ENCODE measurements at regions of chr2 and their contacts with region 1.

Region 1: GRCh38 chr2:236551471-236552211 is 18.0 kb upstream of the ACKR3 start:
- DNase-seq: no peak
- H3K4me3 Mint-ChIP-seq: no peak overlapping the region
- H3K27ac Mint-ChIP-seq: peak overlapping the region; percentile 64
- H3K4me1 Mint-ChIP-seq: peaks cover 93% of the 10 kb centered on the region
- H3K27me3 Mint-ChIP-seq: no peaks in the 10 kb centered on the region

Region 2: GRCh38 chr2:235917506-235917905 is 634.1 kb before region 1 on chr2:
- CTCF ChIA-PET with region 1: no interaction called
- intact Hi-C with region 1: no loop called
- DNase-seq: no peak
- H3K4me3 Mint-ChIP-seq: no peak overlapping the region
- H3K27ac Mint-ChIP-seq: no peak overlapping the region
- H3K4me1 Mint-ChIP-seq: no peaks in the 10 kb centered on the region
- H3K27me3 Mint-ChIP-seq: peaks cover 6% of the 10 kb centered on the region

Region 3: GRCh38 chr2:236250909-236251579 is 300.6 kb before region 1 on chr2:
- CTCF ChIA-PET with region 1: no interaction called
- intact Hi-C with region 1: no loop called
- DNase-seq: no peak
- H3K4me3 Mint-ChIP-seq: no peak overlapping the region
- H3K27ac Mint-ChIP-seq: no peak overlapping the region
- H3K4me1 Mint-ChIP-seq: no peaks in the 10 kb centered on the region
- H3K27me3 Mint-ChIP-seq: peaks cover 17% of the 10 kb centered on the region

Region 4: DNA sequence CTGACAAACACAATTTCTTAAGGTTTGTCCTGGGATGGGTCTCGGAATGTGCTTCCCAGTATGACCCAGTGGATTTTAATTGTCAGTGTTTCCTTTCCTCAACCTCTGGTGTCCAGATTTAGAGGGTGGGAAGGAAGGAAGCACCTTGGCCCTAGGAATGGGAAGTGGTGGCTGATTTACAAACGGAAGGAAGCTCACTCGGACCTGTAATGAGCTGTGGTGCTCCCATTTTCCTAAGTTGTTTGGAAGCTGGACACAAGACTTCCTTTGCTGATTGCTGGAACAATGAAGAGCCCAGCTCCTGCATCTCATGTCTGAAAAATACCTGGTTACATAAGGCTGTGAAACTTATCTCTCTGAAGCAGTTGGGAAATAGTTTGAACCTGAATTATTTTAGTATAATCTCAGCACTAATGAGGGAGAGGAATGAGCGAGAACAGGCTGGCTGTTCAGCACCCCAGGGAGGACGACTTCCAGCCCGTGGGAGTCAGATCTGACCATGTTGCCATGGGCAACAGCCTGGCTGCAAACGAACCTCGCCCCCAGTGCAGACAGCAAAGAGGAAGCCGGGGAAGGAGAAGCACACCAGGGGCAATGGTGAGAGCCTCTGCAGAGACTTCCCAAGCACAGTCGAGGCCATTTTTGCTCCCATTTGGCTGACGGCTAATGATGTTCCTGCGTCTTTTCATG is 213.0 kb before region 1 on chr2:
- CTCF ChIA-PET with region 1: no interaction called
- intact Hi-C with region 1: no loop called
- DNase-seq: no peak
- H3K4me3 Mint-ChIP-seq: no peak overlapping the region
- H3K27ac Mint-ChIP-seq: no peak overlapping the region
- H3K4me1 Mint-ChIP-seq: no peaks in the 10 kb centered on the region
- H3K27me3 Mint-ChIP-seq: no peaks in the 10 kb centered on the region

Region 5: DNA sequence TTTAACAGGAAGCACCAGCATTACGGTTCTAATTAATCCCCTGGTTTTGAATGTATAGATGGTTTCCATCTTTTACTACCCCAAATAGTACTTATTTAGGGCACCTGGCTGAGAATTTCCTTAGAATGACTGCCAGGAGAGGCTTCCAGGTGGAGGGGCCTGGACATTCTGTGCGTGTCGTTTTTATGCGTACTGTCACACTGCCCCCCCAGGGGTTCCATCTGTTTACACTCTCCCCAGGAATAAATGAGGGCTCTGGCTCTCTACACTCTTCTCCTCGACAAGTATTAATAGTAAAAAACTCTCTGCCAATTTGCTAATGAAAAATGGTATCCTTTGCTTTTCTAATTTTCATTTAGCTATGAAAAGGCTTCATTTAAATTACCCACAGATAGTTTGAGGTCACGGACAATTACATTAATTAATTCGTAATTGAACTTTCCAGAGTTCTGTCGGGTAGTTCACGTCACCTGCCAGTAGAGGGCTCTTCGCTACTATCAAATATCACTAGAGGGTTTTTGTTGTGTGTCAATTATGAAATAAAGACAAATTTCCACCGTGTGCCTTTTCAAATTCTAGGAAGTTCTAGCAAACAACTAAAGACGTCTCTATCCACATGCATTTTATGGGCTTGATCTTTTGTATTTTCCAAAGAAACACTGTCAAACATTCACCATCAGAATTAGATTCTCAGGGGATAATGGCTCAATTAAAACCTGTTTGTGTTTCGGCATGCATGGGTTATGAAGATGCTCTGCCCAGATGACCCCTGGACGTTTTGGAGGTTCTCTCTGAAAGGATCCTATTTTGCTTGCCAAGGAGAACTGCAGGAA is 198.7 kb before region 1 on chr2:
- CTCF ChIA-PET with region 1: no interaction called
- intact Hi-C with region 1: no loop called
- DNase-seq: peak; percentile 45
- H3K4me3 Mint-ChIP-seq: no peak overlapping the region
- H3K27ac Mint-ChIP-seq: no peak overlapping the region
- H3K4me1 Mint-ChIP-seq: no peaks in the 10 kb centered on the region
- H3K27me3 Mint-ChIP-seq: no peaks in the 10 kb centered on the region

Region 6: DNA sequence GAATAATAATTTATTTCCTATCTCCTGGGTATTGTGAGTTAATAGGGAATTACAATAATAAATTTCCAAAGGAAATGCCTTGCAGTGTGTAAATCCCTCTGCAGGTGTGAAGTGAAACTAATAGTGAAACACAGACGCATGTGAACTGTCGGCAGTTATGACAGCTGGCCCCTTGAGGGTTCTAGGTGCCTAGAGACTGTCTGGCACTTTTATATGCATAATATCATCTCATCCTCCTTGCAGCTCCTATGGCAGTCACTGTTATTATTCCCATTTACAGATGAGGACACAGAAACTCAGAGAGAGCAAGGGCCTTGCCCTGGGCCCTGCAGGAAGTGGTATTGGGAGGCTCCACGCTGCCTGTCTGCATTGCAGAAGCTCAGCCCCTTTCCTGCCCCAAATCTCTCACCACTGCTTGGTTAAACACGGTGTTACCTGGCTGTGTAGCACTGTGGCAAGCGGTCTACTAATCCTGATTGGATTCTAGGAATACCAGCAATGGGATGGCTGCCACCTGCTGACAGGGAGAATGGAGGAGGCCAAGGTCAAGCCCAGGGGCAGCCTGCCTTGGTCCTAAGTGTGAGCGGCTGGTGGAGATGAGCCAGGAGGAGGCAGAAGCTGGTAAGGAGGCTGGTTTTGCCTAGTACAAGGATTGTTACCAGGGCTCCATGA is 14.8 kb before region 1 on chr2:
- CTCF ChIA-PET with region 1: interaction called, 6 read pairs
- intact Hi-C with region 1: loop called (anchors 1 kb)
- DNase-seq: peak; percentile 69
- H3K4me3 Mint-ChIP-seq: peak overlapping the region; percentile 86
- H3K27ac Mint-ChIP-seq: peak overlapping the region; percentile 91
- H3K4me1 Mint-ChIP-seq: peaks cover 51% of the 10 kb centered on the region
- H3K27me3 Mint-ChIP-seq: no peaks in the 10 kb centered on the region

Measured in activated naive CD4-positive, alpha-beta T cell treated with anti-CD3 and anti-CD28 coated beads for 36 hours (primary cell).